ENCODE measurements at regions of chr17 and their contacts with region 1.

Region 1: GRCh38 chr17:74864866-74865395 is 5.2 kb upstream of the GRIN2C start:
- DNase-seq: peak; percentile 64
- H3K4me3 ChIP-seq: no peak overlapping the region
- H3K27ac ChIP-seq: no peak overlapping the region
- H3K4me1 ChIP-seq: peaks cover 8% of the 10 kb centered on the region
- H3K27me3 ChIP-seq: peaks cover 14% of the 10 kb centered on the region
- CTCF ChIP-seq: peak; percentile 90 to 96 (median 91)
- POLR2A ChIP-seq: no peak

Region 2: DNA sequence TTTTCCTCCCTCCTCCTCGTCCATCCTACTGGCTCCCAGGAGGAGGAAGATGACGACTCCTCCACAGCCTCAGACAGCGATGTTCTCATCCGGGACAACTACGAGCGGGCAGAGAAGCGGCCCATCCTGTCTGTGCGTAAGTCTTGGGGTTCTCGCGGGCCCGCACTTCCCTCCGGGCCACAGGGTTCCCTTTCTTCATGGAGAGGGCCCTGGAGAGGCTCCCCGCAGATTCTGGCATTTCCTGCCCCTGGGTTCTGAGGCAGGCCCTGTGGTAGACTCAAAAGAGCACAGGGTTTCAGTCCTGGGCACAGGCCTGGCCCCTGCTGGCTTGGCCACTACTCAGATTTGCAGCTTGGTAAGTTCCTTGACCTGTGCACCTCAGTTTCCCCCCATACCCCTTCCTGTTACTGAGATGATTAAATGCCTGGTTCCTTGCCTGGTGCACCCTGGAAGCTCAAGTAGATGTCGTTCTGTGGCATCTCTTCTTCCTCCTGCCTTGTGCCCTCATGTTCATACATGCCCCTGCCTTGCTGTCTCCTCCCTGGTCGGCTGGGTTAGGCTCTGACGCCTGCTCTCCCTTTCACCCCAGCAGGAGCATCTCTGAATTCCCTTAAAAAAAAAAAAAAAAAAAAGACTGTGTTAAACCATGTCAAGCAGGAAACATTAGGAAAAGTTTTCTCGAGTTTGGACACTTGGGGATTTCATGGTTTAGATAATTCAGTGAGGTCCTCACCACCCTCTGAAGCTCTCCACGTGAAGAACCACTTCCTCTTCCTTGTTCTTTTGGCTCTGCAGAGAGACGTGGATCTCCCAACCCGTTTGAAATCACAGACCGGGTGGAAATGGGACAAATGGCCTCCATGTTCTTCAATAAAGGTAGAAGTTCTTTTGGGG is 74.5 kb before region 1 on chr17:
- intact Hi-C with region 1: loop called (anchors 1 kb)
- DNase-seq: no peak
- H3K4me3 ChIP-seq: no peak overlapping the region
- H3K27ac ChIP-seq: no peak overlapping the region
- H3K4me1 ChIP-seq: no peaks in the 10 kb centered on the region
- H3K27me3 ChIP-seq: no peaks in the 10 kb centered on the region
- CTCF ChIP-seq: no peak
- POLR2A ChIP-seq: no peak

Region 3: DNA sequence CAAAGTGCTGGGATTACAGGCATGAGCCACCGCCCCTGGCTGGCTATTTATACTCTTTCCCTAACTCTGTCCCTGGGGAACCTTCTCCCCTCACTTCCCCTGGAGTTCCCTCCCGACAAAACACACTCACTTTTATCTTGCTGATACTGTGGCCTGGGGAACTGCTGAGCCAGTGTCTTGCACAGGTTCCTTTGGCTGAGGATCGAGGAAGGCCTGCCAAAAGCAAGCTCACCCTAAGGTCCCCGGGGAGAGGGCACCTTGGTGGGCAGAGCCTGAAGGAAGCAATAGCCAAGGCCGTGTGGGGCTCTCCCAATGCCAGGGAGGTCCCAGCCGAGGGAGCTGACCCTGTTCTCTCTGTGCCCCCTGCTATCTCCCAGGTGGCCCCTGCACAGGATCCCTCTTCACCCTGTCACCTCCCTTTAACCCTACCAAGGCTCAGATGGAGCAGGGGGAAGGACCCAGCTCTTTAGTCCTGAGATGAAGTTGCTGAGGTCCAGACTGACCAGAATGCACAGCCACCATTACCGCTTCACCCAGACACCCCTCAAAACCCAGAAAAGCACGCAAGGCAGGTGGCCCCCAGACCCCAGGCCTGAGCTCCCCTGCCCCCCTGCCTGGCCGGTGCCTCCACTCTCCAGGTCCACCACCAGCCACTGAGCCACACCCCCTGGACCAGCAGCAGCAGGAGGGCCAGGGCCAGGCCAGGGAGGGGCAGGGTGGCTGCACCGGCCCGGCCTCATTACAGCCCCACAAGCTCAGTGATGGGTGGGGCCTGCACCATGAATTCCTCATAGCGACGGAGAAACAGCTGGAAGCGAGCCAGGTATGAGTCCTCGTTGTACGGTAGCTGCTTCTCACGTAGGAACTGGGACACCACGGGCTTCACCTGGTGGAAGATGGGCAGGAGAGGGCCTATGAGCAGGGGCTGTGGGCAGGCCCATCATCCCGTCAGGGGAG is 12.9 kb after region 1 on chr17:
- intact Hi-C with region 1: no loop called
- DNase-seq: no peak
- H3K4me3 ChIP-seq: no peak overlapping the region
- H3K27ac ChIP-seq: no peak overlapping the region
- H3K4me1 ChIP-seq: no peaks in the 10 kb centered on the region
- H3K27me3 ChIP-seq: no peaks in the 10 kb centered on the region
- CTCF ChIP-seq: no peak
- POLR2A ChIP-seq: no peak